ENCODE measurements at regions of chr9 and their contacts with region 1.

Region 1: DNA sequence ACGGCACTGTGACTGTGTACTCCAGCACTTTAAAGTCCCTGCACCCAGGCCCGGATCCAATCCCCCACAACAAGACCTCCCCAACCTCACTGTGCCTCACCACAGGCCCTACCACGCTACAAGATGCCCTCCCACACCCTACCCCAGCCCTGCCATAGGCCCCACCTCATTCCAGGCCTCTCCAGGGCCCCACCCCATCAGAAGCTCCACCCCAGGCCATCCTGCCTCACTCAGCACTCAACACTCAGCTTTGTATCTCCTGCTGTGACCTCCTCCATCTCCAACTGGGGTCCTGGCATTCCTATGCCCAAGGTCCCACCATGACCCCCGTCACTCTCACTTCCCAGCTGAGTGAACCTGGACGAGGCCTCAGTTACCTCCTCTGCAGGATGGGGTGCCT is 38.8 kb downstream of the BARX1 start:
- DNase-seq: no peak
- ATAC-seq: no peak

Region 2: DNA sequence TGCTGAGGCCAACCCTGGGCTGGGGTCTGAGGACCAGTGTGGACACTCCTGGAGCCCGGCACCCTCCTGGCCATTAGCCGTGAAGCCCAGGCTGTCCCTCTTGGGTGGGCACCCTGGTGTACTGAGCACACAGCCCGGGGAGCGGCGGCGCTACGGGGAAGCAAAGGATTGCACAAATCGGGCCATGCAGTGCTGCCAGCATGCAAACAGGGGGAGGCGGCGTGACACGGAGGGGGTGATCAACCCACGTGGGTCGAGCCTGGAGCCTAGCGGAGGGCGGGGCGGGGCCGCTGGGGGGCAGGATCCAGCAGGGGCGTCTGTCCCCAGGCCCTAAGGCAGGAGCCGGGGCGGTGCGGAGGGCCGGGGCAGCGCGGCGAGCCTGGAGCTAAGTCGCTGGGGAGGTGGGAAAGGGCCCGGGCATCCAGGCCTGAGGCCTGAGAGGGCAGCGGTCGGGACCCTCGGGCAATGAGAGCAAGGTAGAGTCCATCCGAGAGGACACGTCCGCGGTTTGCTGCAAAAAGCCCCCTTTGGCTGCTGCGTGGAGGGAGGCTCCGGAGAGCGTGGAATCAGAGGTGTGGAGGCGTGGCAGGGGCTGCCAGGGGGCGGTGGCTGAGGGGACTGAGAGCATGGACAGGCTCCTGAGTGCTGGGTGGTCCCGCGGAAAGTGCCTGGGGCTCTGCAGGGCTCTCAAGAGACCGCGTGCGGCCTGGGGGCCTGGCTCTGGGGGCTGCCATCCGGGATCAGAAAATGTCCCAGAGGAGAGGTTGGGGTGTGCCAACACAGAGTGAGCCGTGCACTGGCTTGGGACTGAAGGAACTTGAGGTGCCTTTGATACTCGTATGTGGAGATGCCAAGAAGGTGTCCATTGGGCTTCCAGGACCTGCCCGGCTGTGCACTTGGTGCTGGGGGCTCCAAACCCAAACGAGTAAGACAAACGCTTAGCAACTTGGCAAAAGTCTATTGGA is 55.4 kb before region 1 on chr9:
- intact Hi-C with region 1: no loop called
- DNase-seq: no peak
- ATAC-seq: no peak

Region 3: GRCh38 chr9:93945400-93946337 is 29.3 kb after region 1 on chr9:
- intact Hi-C with region 1: loop called (anchors 1 kb)
- DNase-seq: no peak
- ATAC-seq: peak; percentile 27

Measured in Right ventricle myocardium inferior (tissue), 1 donor.